ENCODE measurements at regions of chr9 and their contacts with region 1.

Region 1: DNA sequence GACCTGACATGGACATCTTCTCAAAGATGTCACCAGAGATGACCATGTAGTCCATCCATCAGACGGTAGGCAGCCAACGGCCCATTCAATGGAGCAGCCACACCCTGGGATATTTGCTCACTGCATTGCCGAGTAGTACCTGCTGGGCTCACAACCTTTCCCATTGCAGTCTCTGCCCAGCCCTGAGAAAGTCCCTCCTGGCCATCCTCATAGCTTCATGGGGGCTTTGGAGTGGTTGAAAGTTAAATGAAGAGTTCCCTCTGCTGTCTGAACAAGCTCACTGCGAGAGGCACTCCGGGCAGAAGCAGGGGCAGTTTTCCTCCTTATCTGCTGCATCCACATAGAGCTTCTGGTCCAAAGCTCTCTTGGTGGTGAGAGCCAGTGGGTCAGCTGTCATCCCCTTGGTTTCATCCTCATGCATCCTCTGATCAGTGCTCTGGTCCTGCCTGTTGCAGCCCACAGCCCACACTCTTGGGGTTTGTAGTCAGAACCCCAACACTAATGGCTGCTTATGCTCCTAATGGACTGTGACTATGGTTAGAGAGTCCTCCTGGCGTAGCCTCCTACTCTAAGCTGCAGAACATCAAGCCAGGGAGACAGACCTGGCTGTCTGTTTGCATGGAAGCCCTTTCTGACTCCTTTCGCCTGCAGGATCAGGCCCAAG is 23.4 kb downstream of the TNFSF8 start:
- DNase-seq: peak; percentile 63
- H3K4me3 ChIP-seq: no peak overlapping the region
- H3K27ac ChIP-seq: no peak overlapping the region
- H3K4me1 ChIP-seq: peaks cover 11% of the 10 kb centered on the region
- H3K27me3 ChIP-seq: no peaks in the 10 kb centered on the region
- CTCF ChIP-seq: peak; percentile 79

Region 2: DNA sequence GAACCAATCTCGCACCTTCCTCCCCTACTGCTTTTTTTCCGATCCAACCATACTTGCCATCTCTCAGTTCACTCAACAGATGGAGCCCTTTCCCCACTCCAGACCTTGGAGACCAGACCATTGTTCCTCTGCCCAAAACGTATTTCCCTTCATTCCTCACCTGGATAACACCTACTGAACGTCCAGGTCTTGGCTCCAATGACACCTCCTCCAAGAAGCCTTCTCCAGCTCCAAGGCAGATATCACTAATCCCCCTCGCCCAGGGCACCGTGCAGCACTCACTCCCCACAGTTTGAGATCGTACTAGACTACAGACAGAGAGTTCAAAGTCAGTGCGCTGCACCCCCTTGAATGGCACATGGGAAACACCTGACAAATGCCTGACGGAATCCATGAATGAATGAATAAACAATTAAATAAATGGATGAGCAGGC is 472.1 kb before region 1 on chr9:
- CTCF ChIA-PET with region 1: interaction called, 3 read pairs
- POLR2A ChIA-PET with region 1: no interaction called
- intact Hi-C with region 1: loop called (anchors 10 kb)
- DNase-seq: peak; percentile 29
- H3K4me3 ChIP-seq: no peak overlapping the region
- H3K27ac ChIP-seq: no peak overlapping the region
- H3K4me1 ChIP-seq: no peaks in the 10 kb centered on the region
- H3K27me3 ChIP-seq: no peaks in the 10 kb centered on the region
- CTCF ChIP-seq: peak; percentile 61

Region 3: GRCh38 chr9:114681594-114682332 is 225.3 kb before region 1 on chr9 and contains the start of gene TEX48:
- CTCF ChIA-PET with region 1: interaction called, 5 read pairs
- POLR2A ChIA-PET with region 1: no interaction called
- intact Hi-C with region 1: loop called (anchors 1 kb)
- DNase-seq: peak; percentile 84
- H3K4me3 ChIP-seq: no peak within 1 kb of the TSS
- H3K27ac ChIP-seq: no peak within 1 kb of the TSS
- H3K4me1 ChIP-seq: peaks cover 16% of the 10 kb centered on the region
- H3K27me3 ChIP-seq: no peaks in the 10 kb centered on the region
- CTCF ChIP-seq: peak; percentile 74
- total RNA-seq, gene TEX48: not detected in 2 replicates

Region 4: DNA sequence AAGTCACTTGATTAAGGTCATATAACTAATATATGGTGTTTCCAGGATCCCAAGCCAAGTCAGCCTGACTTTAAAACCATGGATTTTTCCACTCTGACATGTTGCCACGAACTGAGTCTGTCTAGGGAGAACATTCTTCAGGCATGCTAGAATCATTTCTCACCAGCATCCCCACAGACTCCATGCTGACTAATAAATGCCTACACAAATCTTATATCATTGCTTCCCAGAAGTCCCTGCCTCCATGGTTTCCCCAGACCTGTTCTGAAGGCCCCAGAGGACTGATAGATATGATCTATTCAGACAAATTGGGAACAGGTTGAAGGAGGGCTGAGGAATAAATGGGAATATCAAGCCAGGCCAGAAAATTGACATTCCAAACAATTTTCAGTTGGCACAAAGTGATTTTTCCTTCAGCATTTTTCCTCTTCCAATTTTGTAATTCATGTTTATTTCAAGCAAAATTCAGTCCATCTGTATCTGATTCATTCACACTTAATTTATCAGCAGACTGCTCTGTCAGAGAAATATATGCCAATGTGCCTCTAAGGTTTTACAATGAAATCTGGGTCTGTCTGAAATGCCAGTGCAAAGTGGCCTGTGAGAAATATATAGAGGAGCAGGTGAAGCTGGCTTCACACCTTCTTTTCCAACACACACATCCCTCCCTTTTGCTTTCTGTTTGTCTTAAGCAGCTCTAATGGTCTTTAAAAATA is 624.5 kb after region 1 on chr9:
- CTCF ChIA-PET with region 1: no interaction called
- POLR2A ChIA-PET with region 1: no interaction called
- intact Hi-C with region 1: loop called (anchors 10 kb)
- DNase-seq: no peak
- H3K4me3 ChIP-seq: no peak overlapping the region
- H3K27ac ChIP-seq: no peak overlapping the region
- H3K4me1 ChIP-seq: no peaks in the 10 kb centered on the region
- H3K27me3 ChIP-seq: no peaks in the 10 kb centered on the region
- CTCF ChIP-seq: no peak